Ascending aorta (tissue), 2 donors: ENCODE measurements at regions of chr15 and their contacts with region 1.

Region 1: GRCh38 chr15:74615508-74616365 is at the start of gene CLK3:
- DNase-seq: peak; percentile 76 to 98
- H3K4me3 ChIP-seq: peak within 1 kb of the TSS; percentile 76 to 86
- H3K27ac ChIP-seq: peak within 1 kb of the TSS; percentile 98 to 99
- H3K4me1 ChIP-seq: peaks cover 19 to 22% of the 10 kb centered on the region in 2 donors
- H3K27me3 ChIP-seq: no peaks in the 10 kb centered on the region
- CTCF ChIP-seq: no peak
- total RNA-seq, gene CLK3: 154 TPM

Region 2: GRCh38 chr15:73991726-73992593 is 623.8 kb before region 1 on chr15 and contains the start of gene STOML1:
- intact Hi-C with region 1: loop called (anchors 2 kb)
- DNase-seq: peak; percentile 71 to 96
- H3K4me3 ChIP-seq: peak within 1 kb of the TSS; percentile 83 to 85
- H3K27ac ChIP-seq: peak within 1 kb of the TSS; percentile 90
- H3K4me1 ChIP-seq: peaks cover 13 to 51% of the 10 kb centered on the region in 2 donors
- H3K27me3 ChIP-seq: no peaks in the 10 kb centered on the region
- CTCF ChIP-seq: peak; percentile 90 to 97 (median 94)
- total RNA-seq, gene STOML1: 15.3 TPM

Region 3: GRCh38 chr15:74571191-74571590 is 44.5 kb before region 1 on chr15:
- intact Hi-C with region 1: loop called (anchors 2 kb)
- DNase-seq: no peak
- H3K4me3 ChIP-seq: no peak overlapping the region
- H3K27ac ChIP-seq: peak overlapping the region; percentile 65 to 90
- H3K4me1 ChIP-seq: peaks cover 2 to 20% of the 10 kb centered on the region in 2 donors
- H3K27me3 ChIP-seq: no peaks in the 10 kb centered on the region
- CTCF ChIP-seq: no peak

Region 4: DNA sequence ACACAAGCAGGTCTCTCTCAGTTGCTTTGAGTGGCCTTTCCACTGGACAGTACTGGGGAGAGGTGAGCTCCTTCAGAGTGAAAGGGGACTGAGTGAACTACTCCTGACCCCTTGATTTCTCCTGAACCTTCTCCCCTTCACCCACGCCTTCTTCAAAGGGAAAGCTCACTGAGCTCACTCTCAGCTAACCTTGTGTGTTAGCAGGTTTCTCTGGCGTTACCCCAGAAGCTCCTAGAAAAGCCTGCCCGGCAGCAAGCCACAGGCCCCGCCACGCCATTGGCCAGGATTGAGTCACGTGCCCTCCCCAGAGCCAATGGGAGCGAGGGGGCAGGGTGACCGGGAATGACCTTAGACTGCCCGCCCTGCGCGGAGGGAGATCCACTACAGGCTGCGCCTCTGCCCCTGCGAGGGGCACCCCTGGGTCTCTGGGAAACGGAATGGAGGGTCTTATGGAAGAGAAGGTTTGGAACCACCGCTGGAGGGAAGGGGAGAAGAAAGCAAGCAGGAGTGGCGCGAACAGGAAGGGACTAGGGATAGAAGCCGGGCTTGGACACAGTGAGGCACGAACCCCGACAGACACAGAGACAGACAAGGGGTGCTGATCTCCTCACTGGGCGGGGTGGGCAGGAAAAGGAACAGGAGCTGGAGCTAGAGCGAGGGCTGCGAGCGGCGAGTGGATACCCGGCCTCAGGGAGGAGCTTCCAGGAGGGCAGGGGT is 17.5 kb before region 1 on chr15:
- intact Hi-C with region 1: loop called (anchors 1 kb)
- DNase-seq: peak; percentile 79 to 95
- H3K4me3 ChIP-seq: peak overlapping the region; percentile 50 to 76
- H3K27ac ChIP-seq: peak overlapping the region; percentile 48 to 77
- H3K4me1 ChIP-seq: peaks cover 0 to 6% of the 10 kb centered on the region in 2 donors
- H3K27me3 ChIP-seq: no peaks in the 10 kb centered on the region
- CTCF ChIP-seq: no peak

Region 5: GRCh38 chr15:74956648-74957300 is 341.0 kb after region 1 on chr15 and contains the start of gene RPP25:
- intact Hi-C with region 1: loop called (anchors 10 kb)
- DNase-seq: peak; percentile 36 to 89
- H3K4me3 ChIP-seq: peak within 1 kb of the TSS; percentile 71 to 84
- H3K27ac ChIP-seq: peak within 1 kb of the TSS; percentile 91 to 94
- H3K4me1 ChIP-seq: peaks cover 7 to 16% of the 10 kb centered on the region in 2 donors
- H3K27me3 ChIP-seq: no peaks in the 10 kb centered on the region
- CTCF ChIP-seq: no peak
- total RNA-seq, gene RPP25: 28.4 TPM